Aorta (tissue), 5 donors: ENCODE measurements at regions of chr5 and their contacts with region 1.

Region 1: GRCh38 chr5:179166886-179167841 is 107.0 kb downstream of the ZNF354C start:
- DNase-seq: peak in 1 of 2 donors; percentile 87
- ATAC-seq: peak; percentile 74
- H3K4me3 ChIP-seq: no peak overlapping the region
- H3K27ac ChIP-seq: no peak overlapping the region
- H3K4me1 ChIP-seq: no peaks in the 10 kb centered on the region
- H3K27me3 ChIP-seq: no peaks in the 10 kb centered on the region

Region 2: DNA sequence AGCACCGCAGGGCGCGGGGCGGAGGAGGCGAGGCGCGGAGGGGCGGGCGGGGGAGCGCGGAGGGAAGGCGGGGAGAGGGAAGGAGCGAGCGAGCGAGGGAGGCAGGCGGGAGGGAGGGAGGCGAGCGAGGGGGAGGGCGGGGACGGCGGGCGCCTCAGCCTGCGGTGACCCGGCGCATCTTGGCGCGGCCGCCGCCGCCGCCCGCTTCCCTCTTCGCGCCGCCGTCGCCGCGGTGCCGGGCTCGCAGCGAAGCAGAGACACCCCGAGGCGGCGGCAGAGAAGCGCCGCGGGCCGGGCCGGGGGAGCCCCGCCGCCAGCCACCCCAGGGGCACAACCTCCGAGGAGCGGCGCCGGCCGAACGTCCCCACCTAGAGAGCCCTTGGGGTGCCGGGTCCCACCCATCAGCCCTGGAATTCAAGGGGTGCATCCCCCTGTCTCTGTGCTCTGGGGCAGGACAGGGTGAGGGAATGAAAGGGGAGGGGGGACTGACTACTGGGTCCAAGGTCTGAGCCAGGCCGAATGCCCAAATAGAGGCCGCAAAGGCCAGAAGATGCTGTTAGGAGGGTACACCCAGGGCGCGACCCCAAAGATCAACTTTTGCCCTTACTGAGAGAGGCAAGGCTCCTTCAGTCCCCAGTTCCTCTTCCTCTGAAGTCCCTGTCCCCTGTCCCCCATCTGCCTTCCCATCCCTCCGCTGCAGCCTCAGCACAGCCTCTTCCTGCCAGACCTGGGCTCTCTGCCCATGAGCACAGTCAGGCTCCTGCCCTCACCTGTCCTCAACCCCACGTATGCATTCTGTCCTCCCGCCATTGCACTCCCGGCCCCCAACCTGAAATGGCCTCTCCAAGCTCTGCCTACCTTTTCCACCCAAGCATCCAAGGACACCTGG is 178.5 kb after region 1 on chr5 and contains the start of gene ADAMTS2:
- intact Hi-C with region 1: loop called (anchors 5 kb)
- DNase-seq: peak; percentile 84 to 92
- ATAC-seq: peak; percentile 70
- H3K4me3 ChIP-seq: peak within 1 kb of the TSS; percentile 65 to 76
- H3K27ac ChIP-seq: no peak within 1 kb of the TSS
- H3K4me1 ChIP-seq: no peaks in the 10 kb centered on the region
- H3K27me3 ChIP-seq: no peaks in the 10 kb centered on the region
- total RNA-seq, gene ADAMTS2: 24.5 to 49.8 TPM

Region 3: GRCh38 chr5:179404321-179405053 is 237.3 kb after region 1 on chr5:
- intact Hi-C with region 1: loop called (anchors 5 to 10 kb)
- DNase-seq: no peak
- ATAC-seq: no peak
- H3K4me3 ChIP-seq: no peak overlapping the region
- H3K27ac ChIP-seq: no peak overlapping the region
- H3K4me1 ChIP-seq: no peaks in the 10 kb centered on the region
- H3K27me3 ChIP-seq: peaks cover 0 to 1% of the 10 kb centered on the region in 2 donors

Region 4: GRCh38 chr5:179495906-179496455 is 328.8 kb after region 1 on chr5:
- intact Hi-C with region 1: loop called (anchors 1 kb)
- DNase-seq: peak in 1 of 2 donors; percentile 28
- ATAC-seq: no peak
- H3K4me3 ChIP-seq: no peak overlapping the region
- H3K27ac ChIP-seq: no peak overlapping the region
- H3K4me1 ChIP-seq: no peaks in the 10 kb centered on the region
- H3K27me3 ChIP-seq: no peaks in the 10 kb centered on the region